Brain microvascular endothelial cell (primary cell): ENCODE measurements at regions of chr11 and their contacts with region 1.

Region 1: DNA sequence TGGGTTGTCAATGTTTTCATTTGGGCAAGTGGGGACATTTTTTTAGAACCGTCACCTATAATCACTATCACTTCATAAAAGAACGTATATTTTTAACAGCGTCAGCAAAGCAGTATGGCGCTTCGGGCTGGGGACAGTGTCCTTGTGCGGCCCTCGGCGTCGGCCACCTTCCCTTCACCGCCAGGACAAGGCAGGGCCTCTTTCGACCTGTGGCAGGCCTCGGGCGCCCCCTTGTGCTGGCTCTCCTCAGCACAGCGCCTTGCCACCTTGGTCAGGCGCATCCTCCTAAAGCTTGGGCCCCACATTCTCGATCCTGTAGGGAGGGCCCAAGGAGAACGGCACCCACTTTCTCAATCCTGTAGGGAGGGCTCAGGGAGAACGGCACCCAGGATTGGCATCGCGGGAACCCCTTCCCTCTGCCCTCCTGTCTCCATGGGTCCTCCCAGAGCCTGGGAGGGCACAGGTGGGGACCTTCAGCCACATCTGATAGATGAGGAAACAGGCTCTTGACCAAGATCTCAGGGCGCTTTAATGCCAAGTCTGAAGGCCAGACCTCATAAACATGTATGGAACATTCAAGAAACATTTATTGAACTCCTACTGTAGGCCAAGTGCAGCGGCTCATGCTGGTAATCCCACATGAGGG is 11.5 kb upstream of the FADD start:
- DNase-seq: peak; percentile 62
- H3K4me3 ChIP-seq: no peak overlapping the region
- H3K27ac ChIP-seq: no peak overlapping the region
- H3K27me3 ChIP-seq: peaks cover 2% of the 10 kb centered on the region
- CTCF ChIP-seq: peak; percentile 97

Region 2: DNA sequence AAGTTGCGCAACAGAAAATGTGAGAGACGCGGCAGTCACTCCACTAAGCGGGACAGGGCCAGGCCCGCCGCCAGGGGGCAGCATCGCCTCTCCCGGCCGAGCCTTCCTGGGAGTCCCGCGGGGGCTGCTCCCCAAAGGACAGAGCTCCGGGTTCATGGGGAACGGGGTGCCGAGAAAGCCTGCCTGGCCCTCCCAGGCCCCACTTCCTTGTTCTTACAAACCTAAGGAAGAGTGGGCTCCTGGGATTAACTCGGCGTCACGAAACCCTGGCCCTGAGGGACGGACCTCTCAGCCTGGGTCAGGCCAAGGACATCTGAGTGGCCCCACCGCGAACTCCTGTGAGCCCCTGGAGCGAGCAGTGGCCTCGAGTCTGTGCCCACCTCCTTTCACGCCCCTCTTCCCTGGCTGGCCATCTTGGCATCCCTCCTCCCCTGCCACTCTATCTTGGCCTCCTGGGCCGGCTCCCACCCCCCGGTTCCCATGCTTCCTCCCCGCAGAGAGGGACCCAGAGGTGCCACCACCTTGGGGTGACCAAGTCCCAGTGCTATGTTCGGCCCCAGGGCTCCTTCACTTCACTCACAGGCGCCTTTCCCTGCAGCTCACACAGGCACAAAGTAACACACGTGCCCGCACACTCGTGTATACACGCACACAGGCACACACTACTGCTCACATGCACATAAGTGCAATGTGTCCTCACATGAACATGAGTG is 272.5 kb before region 1 on chr11:
- in situ Hi-C with region 1: loop called (anchors 25 kb)
- DNase-seq: peak; percentile 47
- H3K4me3 ChIP-seq: no peak overlapping the region
- H3K27ac ChIP-seq: no peak overlapping the region
- H3K27me3 ChIP-seq: peaks cover 2% of the 10 kb centered on the region
- CTCF ChIP-seq: peak; percentile 95

Region 3: GRCh38 chr11:70048279-70049027 is 143.2 kb before region 1 on chr11:
- in situ Hi-C with region 1: loop called (anchors 25 kb)
- DNase-seq: no peak
- H3K4me3 ChIP-seq: no peak overlapping the region
- H3K27ac ChIP-seq: no peak overlapping the region
- H3K27me3 ChIP-seq: peaks cover 3% of the 10 kb centered on the region
- CTCF ChIP-seq: peak; percentile 66

Region 4: DNA sequence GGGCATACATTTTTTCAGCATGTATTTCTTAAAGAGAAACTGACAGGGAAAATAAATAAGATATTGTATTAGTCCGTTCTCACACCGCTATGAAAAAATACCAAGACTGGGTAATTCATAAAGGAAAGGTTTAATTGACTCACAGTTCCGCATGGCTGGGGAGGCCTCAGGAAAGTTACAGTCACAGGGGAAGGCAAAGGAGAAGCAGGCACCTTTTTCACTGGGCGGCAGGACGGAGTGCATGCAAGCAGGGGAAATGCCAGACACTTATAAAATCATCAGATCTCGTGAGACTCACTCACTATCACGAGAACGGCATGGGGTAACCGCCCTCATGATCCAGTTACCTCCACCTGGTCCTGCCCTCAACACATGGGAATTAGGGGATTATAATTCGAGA is 123.1 kb after region 1 on chr11:
- in situ Hi-C with region 1: no loop called
- DNase-seq: no peak
- H3K4me3 ChIP-seq: no peak overlapping the region
- H3K27ac ChIP-seq: no peak overlapping the region
- H3K27me3 ChIP-seq: no peaks in the 10 kb centered on the region
- CTCF ChIP-seq: no peak